Activated CD4-positive, alpha-beta T cell treated with anti-CD3 and anti-CD28 coated beads for 36 hours (primary cell): ENCODE measurements at regions of chr9 and their contacts with region 1.

Region 1: DNA sequence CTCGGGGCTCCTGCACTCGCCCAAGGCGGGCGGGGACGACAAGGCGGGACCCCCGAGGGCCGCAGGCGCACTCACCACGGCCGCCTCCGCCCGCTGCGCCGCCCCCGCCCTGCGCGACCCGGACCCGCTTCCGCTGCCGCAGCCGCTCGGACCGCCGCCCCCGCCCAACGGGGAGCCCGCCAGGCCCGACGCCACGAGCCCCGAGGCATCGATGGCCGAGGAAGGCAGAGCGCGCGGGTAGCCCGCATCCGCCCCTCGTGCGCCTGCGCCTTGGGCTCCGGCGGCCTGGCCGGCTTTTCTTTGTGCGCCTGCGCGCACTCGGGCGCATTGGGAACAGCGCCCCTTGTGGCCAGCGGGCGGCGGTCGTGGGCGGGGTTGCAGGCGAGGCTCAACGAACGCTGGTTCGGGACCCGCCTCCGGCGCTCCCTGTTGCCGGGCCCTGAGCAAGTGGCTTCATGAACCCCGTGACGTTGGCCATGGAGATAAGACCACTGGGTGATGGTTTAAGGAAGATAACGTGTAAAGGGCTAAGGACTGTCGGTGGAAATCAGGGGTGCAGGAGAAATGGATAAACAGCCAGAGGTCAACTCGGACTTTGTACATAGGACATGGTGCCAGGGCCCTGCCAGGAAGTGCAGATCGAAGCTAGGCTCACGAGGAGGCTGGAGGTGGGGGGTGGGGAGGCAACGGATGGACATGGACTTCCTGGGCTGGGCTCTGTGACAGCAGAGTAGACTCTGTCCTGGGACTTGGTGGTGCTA is at the starts of genes C8G and FBXW5:
- DNase-seq: peak; percentile 97
- ATAC-seq: peak; percentile 84
- H3K4me3 Mint-ChIP-seq: peak within 1 kb of the TSS; percentile 77
- H3K27ac Mint-ChIP-seq: peak within 1 kb of the TSS; percentile 88
- H3K4me1 Mint-ChIP-seq: peaks cover 9% of the 10 kb centered on the region
- H3K27me3 Mint-ChIP-seq: no peaks in the 10 kb centered on the region
- total RNA-seq, gene C8G: 0.77 TPM in 1 of 2 experiments, not detected in the other
- total RNA-seq, gene FBXW5: 54.4 to 66.4 TPM

Region 2: GRCh38 chr9:136728080-136728547 is 216.6 kb before region 1 on chr9:
- CTCF ChIA-PET with region 1: interaction called, 4 read pairs
- POLR2A ChIA-PET with region 1: no interaction called
- intact Hi-C with region 1: loop called in 1 of 2 experiments (anchors 1 kb)
- DNase-seq: peak; percentile 95
- ATAC-seq: peak; percentile 72
- H3K4me3 Mint-ChIP-seq: peak overlapping the region; percentile 100
- H3K27ac Mint-ChIP-seq: no peak overlapping the region
- H3K4me1 Mint-ChIP-seq: peaks cover 39% of the 10 kb centered on the region
- H3K27me3 Mint-ChIP-seq: no peaks in the 10 kb centered on the region

Region 3: GRCh38 chr9:136865735-136866103 is 79.0 kb before region 1 on chr9:
- CTCF ChIA-PET with region 1: no interaction called
- POLR2A ChIA-PET with region 1: no interaction called
- intact Hi-C with region 1: loop called in 1 of 2 experiments (anchors 1 kb)
- DNase-seq: no peak
- ATAC-seq: no peak
- H3K4me3 Mint-ChIP-seq: peak overlapping the region; percentile 81
- H3K27ac Mint-ChIP-seq: peak overlapping the region; percentile 38
- H3K4me1 Mint-ChIP-seq: peaks cover 16% of the 10 kb centered on the region
- H3K27me3 Mint-ChIP-seq: no peaks in the 10 kb centered on the region

Region 4: GRCh38 chr9:137021979-137022619 is 77.4 kb after region 1 on chr9:
- CTCF ChIA-PET with region 1: no interaction called
- POLR2A ChIA-PET with region 1: no interaction called
- intact Hi-C with region 1: loop called in 1 of 2 experiments (anchors 1 kb)
- DNase-seq: peak; percentile 93
- ATAC-seq: peak; percentile 97
- H3K4me3 Mint-ChIP-seq: no peak overlapping the region
- H3K27ac Mint-ChIP-seq: no peak overlapping the region
- H3K4me1 Mint-ChIP-seq: peaks cover 3% of the 10 kb centered on the region
- H3K27me3 Mint-ChIP-seq: no peaks in the 10 kb centered on the region

Region 5: GRCh38 chr9:137034863-137035761 is 90.4 kb after region 1 on chr9:
- CTCF ChIA-PET with region 1: interaction called, 23 read pairs
- POLR2A ChIA-PET with region 1: interaction called, 3 read pairs
- intact Hi-C with region 1: loop called (anchors 1 kb)
- DNase-seq: peak; percentile 96
- ATAC-seq: peak; percentile 80
- H3K4me3 Mint-ChIP-seq: peak overlapping the region; percentile 66
- H3K27ac Mint-ChIP-seq: peak overlapping the region; percentile 83
- H3K4me1 Mint-ChIP-seq: peaks cover 36% of the 10 kb centered on the region
- H3K27me3 Mint-ChIP-seq: no peaks in the 10 kb centered on the region